Caco-2 (cell line): ENCODE measurements at regions of chr21 and their contacts with region 1.

Region 1: DNA sequence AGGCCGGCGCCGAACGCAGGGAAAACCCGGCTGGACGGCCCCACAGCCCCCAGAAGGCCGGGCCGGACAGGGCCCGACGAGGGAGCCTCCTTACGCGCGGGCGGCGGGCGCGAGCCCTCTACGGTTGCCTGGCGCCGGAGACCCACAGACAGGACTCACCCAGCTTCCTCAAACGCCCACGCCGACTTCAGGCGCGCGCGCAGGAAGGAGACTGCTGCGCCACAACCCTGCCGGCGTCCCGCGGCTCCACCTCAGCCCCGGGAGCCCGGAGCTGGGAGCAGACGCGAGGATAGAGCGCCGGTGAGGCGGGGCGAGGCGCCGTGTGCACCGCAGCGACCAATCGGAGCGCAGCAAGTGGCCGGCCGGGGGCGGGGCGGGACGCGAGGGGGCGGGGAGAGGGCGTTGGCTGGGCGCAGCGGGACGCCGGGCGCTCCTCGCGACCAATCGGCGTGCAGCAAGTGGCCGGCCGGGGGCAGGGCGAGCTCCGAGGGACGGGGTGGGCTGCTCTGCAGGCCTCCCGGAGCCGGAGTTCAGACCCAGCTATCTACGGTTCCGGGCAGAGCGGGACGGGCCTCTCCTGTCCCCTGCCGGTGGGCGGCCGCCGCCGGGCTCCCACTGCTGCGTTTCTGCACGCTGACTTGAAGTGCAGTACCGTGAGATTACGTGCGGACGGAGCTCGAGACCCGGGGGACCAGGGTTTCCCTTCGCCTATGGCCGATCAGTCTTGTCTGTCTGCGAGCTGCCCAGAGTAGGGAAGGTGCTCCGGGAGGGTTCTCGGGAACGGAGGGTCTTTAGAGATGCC is at the start of gene TMEM50B:
- DNase-seq: peak; percentile 97
- H3K4me3 ChIP-seq: peak within 1 kb of the TSS; percentile 91
- H3K4me3 Mint-ChIP-seq: peak within 1 kb of the TSS; percentile 91
- H3K27ac Mint-ChIP-seq: peak within 1 kb of the TSS; percentile 89
- H3K4me1 ChIP-seq: peaks cover 6% of the 10 kb centered on the region; the same call in 1 of the 2 replicates
- H3K4me1 Mint-ChIP-seq: peaks cover 4% of the 10 kb centered on the region
- H3K27me3 ChIP-seq: no peaks in the 10 kb centered on the region
- H3K27me3 Mint-ChIP-seq: no peaks in the 10 kb centered on the region
- CTCF ChIP-seq: peak; percentile 35 to 82
- total RNA-seq, gene TMEM50B: 21.0 and 25.9 TPM in 2 replicates

Region 2: DNA sequence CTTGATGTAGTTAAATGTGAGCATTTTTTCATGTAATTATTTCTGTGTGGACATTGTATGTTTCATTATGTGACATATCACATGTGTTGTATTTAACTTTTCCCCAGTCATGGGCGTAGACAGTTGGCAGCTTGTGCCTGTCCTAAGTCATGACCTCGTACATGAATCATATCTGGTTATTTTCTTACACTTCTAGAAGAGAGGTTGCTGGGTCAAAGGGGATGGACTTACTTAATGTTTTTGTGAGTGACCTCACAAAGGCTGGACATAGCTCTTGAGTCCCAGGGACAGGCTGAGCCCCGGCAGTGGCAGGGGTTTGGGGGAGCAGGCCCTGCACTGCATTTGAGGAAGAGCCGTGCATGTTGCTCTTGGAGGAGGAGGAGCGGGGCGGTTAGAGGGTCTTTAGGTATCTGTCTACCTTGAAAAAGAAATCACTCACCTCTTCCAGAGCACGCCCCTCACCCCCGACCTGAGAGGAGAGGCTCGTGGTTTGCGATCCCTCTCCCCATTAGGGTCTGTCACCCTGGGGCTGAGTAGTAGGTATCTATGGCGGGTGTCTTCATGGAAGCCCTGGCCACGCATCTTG is 60.2 kb before region 1 on chr21:
- CTCF ChIA-PET with region 1: no interaction called
- POLR2A ChIA-PET with region 1: no interaction called
- intact Hi-C with region 1: no loop called
- DNase-seq: no peak
- H3K4me3 ChIP-seq: no peak overlapping the region
- H3K4me3 Mint-ChIP-seq: no peak overlapping the region
- H3K27ac Mint-ChIP-seq: no peak overlapping the region
- H3K4me1 ChIP-seq: peaks cover 17% of the 10 kb centered on the region
- H3K4me1 Mint-ChIP-seq: peaks cover 13% of the 10 kb centered on the region
- H3K27me3 ChIP-seq: no peaks in the 10 kb centered on the region
- H3K27me3 Mint-ChIP-seq: no peaks in the 10 kb centered on the region
- CTCF ChIP-seq: no peak

Region 3: GRCh38 chr21:33441489-33442477 is 38.1 kb before region 1 on chr21:
- CTCF ChIA-PET with region 1: interaction called, 13 read pairs
- POLR2A ChIA-PET with region 1: interaction called, 3 read pairs
- intact Hi-C with region 1: no loop called
- DNase-seq: no peak
- H3K4me3 ChIP-seq: no peak overlapping the region
- H3K4me3 Mint-ChIP-seq: no peak overlapping the region
- H3K27ac Mint-ChIP-seq: no peak overlapping the region
- H3K4me1 ChIP-seq: no peaks in the 10 kb centered on the region
- H3K4me1 Mint-ChIP-seq: peaks cover 6% of the 10 kb centered on the region
- H3K27me3 ChIP-seq: no peaks in the 10 kb centered on the region
- H3K27me3 Mint-ChIP-seq: no peaks in the 10 kb centered on the region
- CTCF ChIP-seq: no peak

Region 4: DNA sequence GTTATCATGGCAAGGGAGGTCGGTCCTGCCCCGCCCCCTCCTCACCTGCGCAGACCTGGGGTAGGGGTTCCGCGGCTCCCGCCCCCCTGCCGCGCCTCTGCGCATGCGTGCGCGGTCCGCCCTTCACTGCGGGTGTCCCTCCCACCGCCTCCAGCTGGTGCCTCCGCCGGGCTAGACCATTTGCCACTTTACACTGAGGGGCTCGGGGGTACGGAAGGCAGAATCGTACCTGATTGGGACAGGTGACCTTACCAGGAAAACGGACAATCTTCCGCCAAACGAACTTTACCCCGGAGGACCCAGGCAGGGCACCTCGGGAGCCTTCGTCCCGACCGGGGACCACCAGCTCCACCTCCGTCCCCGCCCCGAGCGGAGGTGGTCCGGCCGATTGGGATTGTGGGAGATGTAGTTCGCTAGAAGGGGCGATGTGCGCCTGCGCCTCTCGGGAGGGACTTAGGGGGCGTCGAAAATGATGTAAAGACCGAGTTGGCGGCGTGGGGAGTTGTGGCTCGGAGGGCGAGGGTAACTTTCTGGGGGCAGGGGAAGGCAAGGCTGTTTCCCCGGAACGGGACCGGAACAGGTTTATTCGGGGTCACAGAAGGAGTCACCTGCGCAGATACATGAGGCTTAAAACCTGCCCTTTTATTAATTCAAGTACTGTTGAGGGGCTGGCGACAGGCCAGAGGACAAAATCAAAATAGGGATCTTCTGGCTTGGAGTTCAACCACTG is 11.7 kb after region 1 on chr21 and contains the start of gene DNAJC28:
- CTCF ChIA-PET with region 1: interaction called, 27 read pairs
- POLR2A ChIA-PET with region 1: interaction called, 43 read pairs
- intact Hi-C with region 1: no loop called
- DNase-seq: peak; percentile 93 to 94
- H3K4me3 ChIP-seq: peak within 1 kb of the TSS; percentile 69
- H3K4me3 Mint-ChIP-seq: peak within 1 kb of the TSS; percentile 80
- H3K27ac Mint-ChIP-seq: peak within 1 kb of the TSS; percentile 68
- H3K4me1 ChIP-seq: no peaks in the 10 kb centered on the region
- H3K4me1 Mint-ChIP-seq: peaks cover 6% of the 10 kb centered on the region
- H3K27me3 ChIP-seq: no peaks in the 10 kb centered on the region
- H3K27me3 Mint-ChIP-seq: no peaks in the 10 kb centered on the region
- CTCF ChIP-seq: no peak
- total RNA-seq, gene DNAJC28: 2.5 and 2.7 TPM in 2 replicates

Region 5: GRCh38 chr21:33588485-33589335 is 108.8 kb after region 1 on chr21 and contains the start of gene DONSON:
- CTCF ChIA-PET with region 1: interaction called, 3 read pairs
- POLR2A ChIA-PET with region 1: interaction called, 17 read pairs
- intact Hi-C with region 1: no loop called
- DNase-seq: peak; percentile 94 to 96
- H3K4me3 ChIP-seq: peak within 1 kb of the TSS; percentile 85
- H3K4me3 Mint-ChIP-seq: peak within 1 kb of the TSS; percentile 91
- H3K27ac Mint-ChIP-seq: peak within 1 kb of the TSS; percentile 88
- H3K4me1 ChIP-seq: peaks cover 15% of the 10 kb centered on the region
- H3K4me1 Mint-ChIP-seq: peaks cover 8% of the 10 kb centered on the region
- H3K27me3 ChIP-seq: no peaks in the 10 kb centered on the region
- H3K27me3 Mint-ChIP-seq: no peaks in the 10 kb centered on the region
- CTCF ChIP-seq: no peak
- total RNA-seq, gene DONSON: 36.2 and 36.4 TPM in 2 replicates